PC-3 (cell line): ENCODE measurements at regions of chr10 and their contacts with region 1.

Region 1: DNA sequence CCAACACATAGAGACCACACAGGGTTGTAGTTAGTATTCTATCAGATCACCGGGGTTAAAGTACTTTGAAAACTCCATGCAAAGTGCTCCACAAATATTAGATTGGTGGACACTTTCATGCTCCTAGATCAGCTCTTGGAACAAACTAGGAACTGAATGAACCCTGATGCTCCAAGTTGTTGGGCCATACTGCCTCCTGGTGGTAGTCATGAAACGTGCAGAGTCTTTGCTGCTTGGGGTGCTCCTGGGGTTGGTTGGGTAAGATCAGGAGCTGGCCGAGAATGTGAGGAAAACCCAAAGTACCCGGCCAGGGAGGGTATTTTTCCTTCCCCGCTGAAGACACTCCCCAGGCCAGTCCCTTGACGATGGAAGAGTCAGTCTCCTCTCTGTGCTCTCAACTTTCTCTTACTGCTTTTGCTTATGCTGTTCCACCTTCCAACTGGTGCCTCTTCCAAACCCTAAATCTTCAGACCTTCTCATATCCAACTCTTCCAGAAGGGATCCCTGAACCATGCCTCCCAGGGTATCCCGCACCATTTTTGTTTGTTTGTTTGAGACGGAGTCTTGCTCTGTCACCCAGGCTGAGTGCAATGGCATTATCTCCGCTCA is 920 bp upstream of the RPEL1 start:
- DNase-seq: peak; percentile 82
- ATAC-seq: peak; percentile 14; the same call in 1 of the 2 replicates
- H3K4me3 ChIP-seq: no peak overlapping the region
- H3K27ac ChIP-seq: no peak overlapping the region
- H3K4me1 ChIP-seq: peaks cover 26% of the 10 kb centered on the region
- H3K27me3 ChIP-seq: no peaks in the 10 kb centered on the region
- CTCF ChIP-seq: peak; percentile 86

Region 2: GRCh38 chr10:102596506-102596971 is 648.2 kb before region 1 on chr10:
- CTCF ChIA-PET with region 1: no interaction called
- POLR2A ChIA-PET with region 1: no interaction called
- intact Hi-C with region 1: no loop called
- DNase-seq: peak; percentile 68
- ATAC-seq: peak; percentile 83
- H3K4me3 ChIP-seq: no peak overlapping the region
- H3K27ac ChIP-seq: no peak overlapping the region
- H3K4me1 ChIP-seq: peaks cover 18% of the 10 kb centered on the region
- H3K27me3 ChIP-seq: no peaks in the 10 kb centered on the region
- CTCF ChIP-seq: peak; percentile 78

Region 3: GRCh38 chr10:102917962-102918816 is 326.6 kb before region 1 on chr10 and contains the start of gene CNNM2:
- CTCF ChIA-PET with region 1: no interaction called
- POLR2A ChIA-PET with region 1: no interaction called
- intact Hi-C with region 1: loop called (anchors 2 kb)
- DNase-seq: peak; percentile 98
- ATAC-seq: peak; percentile 89
- H3K4me3 ChIP-seq: peak within 1 kb of the TSS; percentile 85
- H3K27ac ChIP-seq: no peak within 1 kb of the TSS
- H3K4me1 ChIP-seq: peaks cover 22% of the 10 kb centered on the region
- H3K27me3 ChIP-seq: no peaks in the 10 kb centered on the region
- CTCF ChIP-seq: no peak
- total RNA-seq, gene CNNM2: 7.2 and 9.7 TPM in 2 replicates

Region 4: GRCh38 chr10:103102195-103102594 is 142.6 kb before region 1 on chr10:
- CTCF ChIA-PET with region 1: interaction called, 7 read pairs
- POLR2A ChIA-PET with region 1: no interaction called
- intact Hi-C with region 1: loop called (anchors 5 kb)
- DNase-seq: no peak
- ATAC-seq: no peak
- H3K4me3 ChIP-seq: no peak overlapping the region
- H3K27ac ChIP-seq: no peak overlapping the region
- H3K4me1 ChIP-seq: peaks cover 35% of the 10 kb centered on the region
- H3K27me3 ChIP-seq: no peaks in the 10 kb centered on the region
- CTCF ChIP-seq: no peak

Region 5: GRCh38 chr10:103192451-103193106 is 52.2 kb before region 1 on chr10:
- CTCF ChIA-PET with region 1: interaction called, 3 read pairs
- POLR2A ChIA-PET with region 1: interaction called, 38 read pairs
- intact Hi-C with region 1: loop called (anchors 2 kb)
- DNase-seq: peak; percentile 56
- ATAC-seq: peak; percentile 49
- H3K4me3 ChIP-seq: peak overlapping the region; percentile 99
- H3K27ac ChIP-seq: peak overlapping the region; percentile 76
- H3K4me1 ChIP-seq: peaks cover 48% of the 10 kb centered on the region
- H3K27me3 ChIP-seq: no peaks in the 10 kb centered on the region
- CTCF ChIP-seq: no peak

Region 6: GRCh38 chr10:103316087-103316486 is 71.3 kb after region 1 on chr10:
- CTCF ChIA-PET with region 1: no interaction called
- POLR2A ChIA-PET with region 1: no interaction called
- intact Hi-C with region 1: no loop called
- DNase-seq: no peak
- ATAC-seq: no peak
- H3K4me3 ChIP-seq: no peak overlapping the region
- H3K27ac ChIP-seq: no peak overlapping the region
- H3K4me1 ChIP-seq: no peaks in the 10 kb centered on the region
- H3K27me3 ChIP-seq: no peaks in the 10 kb centered on the region
- CTCF ChIP-seq: no peak

Region 7: DNA sequence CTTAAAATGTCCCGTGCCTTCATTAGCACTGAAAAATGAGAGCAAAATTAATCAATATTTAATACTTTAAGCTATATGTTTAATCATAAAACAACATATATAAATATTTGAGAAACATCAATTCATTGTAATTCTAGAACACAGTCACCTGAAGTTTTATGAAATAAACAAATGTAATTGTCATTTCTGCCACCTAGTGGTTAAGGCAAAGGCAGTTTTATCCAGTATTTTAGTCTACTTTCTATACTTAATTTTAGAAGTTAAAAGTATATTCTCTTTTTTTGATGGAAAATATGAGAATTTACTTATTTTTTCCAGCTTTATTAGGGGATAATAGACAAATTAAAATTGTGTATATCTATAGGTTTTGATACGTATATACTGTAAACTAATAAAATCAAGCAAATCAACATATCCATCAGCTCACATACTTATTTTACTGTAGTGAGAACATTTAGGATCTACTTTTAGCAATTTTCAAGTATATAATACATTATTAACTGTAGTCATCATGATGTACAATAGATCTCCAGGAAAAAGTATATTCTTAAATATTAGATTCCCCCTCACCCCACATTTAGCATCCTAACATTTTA is 89.3 kb after region 1 on chr10:
- CTCF ChIA-PET with region 1: no interaction called
- POLR2A ChIA-PET with region 1: interaction called, 3 read pairs
- intact Hi-C with region 1: loop called (anchors 1 kb)
- DNase-seq: peak; percentile 58
- ATAC-seq: no peak
- H3K4me3 ChIP-seq: no peak overlapping the region
- H3K27ac ChIP-seq: no peak overlapping the region
- H3K4me1 ChIP-seq: no peaks in the 10 kb centered on the region
- H3K27me3 ChIP-seq: no peaks in the 10 kb centered on the region
- CTCF ChIP-seq: peak; percentile 66